Panc1 (cell line): ENCODE measurements at regions of chr11 and their contacts with region 1.

Region 1: DNA sequence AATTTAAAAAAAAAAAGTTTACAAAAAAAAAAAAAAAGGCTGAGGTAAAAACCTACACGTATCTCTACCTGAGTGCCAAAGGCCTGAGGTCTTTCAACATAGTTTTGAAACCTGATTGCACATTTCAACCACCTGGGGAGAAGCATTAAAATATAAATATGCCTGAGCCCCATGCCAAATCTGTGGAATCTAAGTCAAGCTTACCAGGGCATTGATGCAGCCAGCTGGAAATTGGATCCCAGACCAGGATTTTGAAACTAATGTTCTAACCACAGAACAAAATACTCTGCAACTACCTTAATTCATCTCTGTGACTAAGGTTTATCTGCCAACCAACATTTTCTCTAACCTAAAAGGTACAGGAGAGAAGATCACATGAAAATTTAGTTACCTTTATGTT is 38.8 kb upstream of the CHRNA10 start:
- DNase-seq: no peak
- ATAC-seq: no peak
- H3K4me3 ChIP-seq: no peak overlapping the region
- H3K27ac ChIP-seq: no peak overlapping the region
- H3K4me1 ChIP-seq: no peaks in the 10 kb centered on the region
- H3K27me3 ChIP-seq: no peaks in the 10 kb centered on the region
- CTCF ChIP-seq: no peak

Region 2: GRCh38 chr11:3767536-3767935 is 57.6 kb after region 1 on chr11:
- CTCF ChIA-PET with region 1: no interaction called
- POLR2A ChIA-PET with region 1: no interaction called
- in situ Hi-C with region 1: loop called (anchors 10 kb)
- intact Hi-C with region 1: loop called (anchors 5 kb)
- DNase-seq: no peak
- ATAC-seq: no peak
- H3K4me3 ChIP-seq: no peak overlapping the region
- H3K27ac ChIP-seq: no peak overlapping the region
- H3K4me1 ChIP-seq: no peaks in the 10 kb centered on the region
- H3K27me3 ChIP-seq: no peaks in the 10 kb centered on the region
- CTCF ChIP-seq: no peak

Region 3: GRCh38 chr11:3773180-3773579 is 63.2 kb after region 1 on chr11:
- CTCF ChIA-PET with region 1: no interaction called
- POLR2A ChIA-PET with region 1: no interaction called
- in situ Hi-C with region 1: loop called (anchors 10 kb)
- intact Hi-C with region 1: loop called (anchors 5 kb)
- DNase-seq: no peak
- ATAC-seq: no peak
- H3K4me3 ChIP-seq: no peak overlapping the region
- H3K27ac ChIP-seq: no peak overlapping the region
- H3K4me1 ChIP-seq: no peaks in the 10 kb centered on the region
- H3K27me3 ChIP-seq: no peaks in the 10 kb centered on the region
- CTCF ChIP-seq: no peak